GM10248 (cell line): ENCODE measurements at regions of chr17 and their contacts with region 1.

Region 1: DNA sequence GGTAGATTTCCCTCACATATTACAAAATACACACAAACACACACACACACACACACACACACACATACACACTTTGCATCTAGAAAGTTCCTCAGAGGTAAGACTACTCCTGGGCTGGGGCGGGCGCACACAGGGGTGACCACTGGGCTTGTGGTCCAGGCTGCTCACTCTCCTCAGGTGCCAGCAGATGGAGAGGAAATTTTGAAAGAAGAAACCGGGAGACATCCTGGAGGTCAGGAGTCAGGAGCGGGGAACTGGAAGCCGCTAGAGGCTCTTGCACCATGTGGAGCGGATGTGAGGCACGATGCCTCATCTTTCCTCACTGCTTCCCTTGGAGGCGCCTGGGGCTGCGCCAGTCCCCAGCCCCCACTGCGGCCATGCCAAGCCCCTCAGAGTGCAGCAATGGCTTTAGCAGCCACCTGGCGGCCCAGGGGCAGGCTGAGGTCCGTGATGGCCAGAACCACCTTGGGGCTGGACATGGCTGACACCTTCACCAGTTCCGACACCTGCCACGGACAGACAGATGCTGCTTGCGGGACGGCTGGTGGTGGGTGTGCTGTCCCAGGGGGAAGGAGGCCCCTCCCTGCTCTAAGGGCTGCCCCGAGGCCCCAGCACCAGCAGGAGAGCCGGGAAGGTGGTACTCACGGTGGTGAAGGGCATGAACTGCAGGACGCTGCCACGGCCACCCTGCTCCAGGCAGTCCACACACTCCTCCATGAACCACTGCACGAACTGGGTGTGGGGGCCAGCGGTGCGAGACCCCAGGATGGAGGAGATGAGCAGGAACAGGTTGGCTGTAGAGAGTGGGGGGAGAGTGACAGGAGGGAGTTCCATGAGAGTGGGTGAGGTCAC is 4.1 kb downstream of the CSF3 start:
- DNase-seq: no peak
- CTCF ChIP-seq: no peak

Region 2: DNA sequence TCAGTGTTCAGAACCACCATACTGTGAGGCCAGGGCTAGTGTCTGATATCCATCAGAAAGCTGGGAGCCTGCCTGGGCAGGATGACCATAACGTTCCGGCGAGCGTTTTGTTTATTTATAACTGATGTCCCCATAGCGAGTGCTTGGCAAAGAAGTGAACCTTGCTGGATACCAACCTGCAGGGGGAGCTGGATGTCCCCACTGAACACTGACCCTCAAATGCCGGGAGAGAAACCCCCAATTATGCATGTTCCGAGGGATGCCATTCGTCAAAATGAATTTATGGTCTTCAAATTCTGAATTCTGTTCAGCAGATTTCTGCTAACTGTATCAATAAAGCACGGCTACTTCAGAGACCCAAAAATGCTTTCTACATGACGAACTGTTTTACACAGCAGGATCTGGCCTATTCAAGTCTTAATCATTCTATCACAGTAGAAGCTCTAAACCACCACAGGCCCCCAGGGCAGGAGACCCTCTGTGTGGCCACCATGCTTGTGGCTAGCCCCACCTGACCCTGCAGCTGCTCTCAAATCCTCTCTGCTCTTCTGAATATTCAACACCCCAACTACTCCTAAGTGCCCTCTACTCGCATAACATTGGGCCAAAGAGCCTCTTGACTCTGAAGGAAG is 19.6 kb after region 1 on chr17:
- CTCF ChIA-PET with region 1: interaction called, 137 read pairs
- POLR2A ChIA-PET with region 1: no interaction called
- DNase-seq: no peak
- CTCF ChIP-seq: peak; percentile 10

Region 3: GRCh38 chr17:40130352-40131042 is 111.1 kb after region 1 on chr17:
- CTCF ChIA-PET with region 1: no interaction called
- POLR2A ChIA-PET with region 1: no interaction called
- DNase-seq: no peak
- CTCF ChIP-seq: no peak